Aorta (tissue), 5 donors: ENCODE measurements at regions of chr1 and their contacts with region 1.

Region 1: GRCh38 chr1:211548321-211549091 is 30.5 kb downstream of the SLC30A1 start:
- DNase-seq: no peak
- ATAC-seq: peak; percentile 36
- H3K4me3 ChIP-seq: no peak overlapping the region
- H3K27ac ChIP-seq: peak overlapping the region; percentile 5 to 14
- H3K4me1 ChIP-seq: no peaks in the 10 kb centered on the region
- H3K27me3 ChIP-seq: no peaks in the 10 kb centered on the region

Region 2: GRCh38 chr1:211529453-211529852 is 19.1 kb before region 1 on chr1:
- intact Hi-C with region 1: loop called in 1 of 2 experiments (anchors 2 kb)
- DNase-seq: no peak
- ATAC-seq: no peak
- H3K4me3 ChIP-seq: no peak overlapping the region
- H3K27ac ChIP-seq: no peak overlapping the region
- H3K4me1 ChIP-seq: no peaks in the 10 kb centered on the region
- H3K27me3 ChIP-seq: no peaks in the 10 kb centered on the region